ENCODE measurements at regions of chr20 and their contacts with region 1.

Region 1: DNA sequence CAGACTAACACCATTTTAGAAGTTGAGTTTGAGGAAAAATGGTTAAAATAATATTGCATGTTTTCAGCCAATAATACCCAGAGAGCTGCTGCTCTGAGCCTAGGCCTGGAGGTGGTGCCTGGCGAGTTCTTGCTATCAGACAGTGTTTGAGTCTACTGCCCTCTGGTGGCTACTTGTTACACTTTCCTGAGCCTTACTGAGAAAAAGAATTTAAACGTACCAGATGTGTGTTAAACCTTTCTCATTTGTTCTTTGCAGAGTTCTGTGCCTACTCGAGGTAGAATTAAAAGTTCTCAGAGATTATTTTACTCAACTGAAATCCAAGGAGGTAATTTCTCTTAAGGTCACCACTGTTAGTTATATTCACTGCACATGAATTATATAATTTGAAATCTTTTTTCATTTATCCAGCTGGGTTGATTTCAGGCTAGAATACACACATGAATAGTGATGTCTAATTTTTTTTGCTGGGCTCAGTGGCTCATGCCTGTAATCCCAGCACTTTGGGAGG is 38.2 kb downstream of the SHLD1 start:
- DNase-seq: peak; percentile 89
- ATAC-seq: peak; percentile 99
- H3K4me3 ChIP-seq: no peak overlapping the region
- H3K4me3 Mint-ChIP-seq: no peak overlapping the region
- H3K27ac ChIP-seq: no peak overlapping the region
- H3K27ac Mint-ChIP-seq: peak overlapping the region; percentile 17
- H3K4me1 ChIP-seq: no peaks in the 10 kb centered on the region
- H3K4me1 Mint-ChIP-seq: peaks cover 11% of the 10 kb centered on the region
- H3K27me3 ChIP-seq: no peaks in the 10 kb centered on the region
- H3K27me3 Mint-ChIP-seq: no peaks in the 10 kb centered on the region
- CTCF ChIP-seq: peak; percentile 96

Region 2: GRCh38 chr20:5550733-5551529 is 237.5 kb before region 1 on chr20:
- CTCF ChIA-PET with region 1: interaction called, 12 read pairs
- POLR2A ChIA-PET with region 1: no interaction called
- intact Hi-C with region 1: no loop called
- DNase-seq: no peak
- ATAC-seq: no peak
- H3K4me3 ChIP-seq: no peak overlapping the region
- H3K4me3 Mint-ChIP-seq: no peak overlapping the region
- H3K27ac ChIP-seq: no peak overlapping the region
- H3K27ac Mint-ChIP-seq: peak overlapping the region; percentile 3
- H3K4me1 ChIP-seq: no peaks in the 10 kb centered on the region
- H3K4me1 Mint-ChIP-seq: no peaks in the 10 kb centered on the region
- H3K27me3 ChIP-seq: no peaks in the 10 kb centered on the region
- H3K27me3 Mint-ChIP-seq: no peaks in the 10 kb centered on the region
- CTCF ChIP-seq: no peak

Region 3: DNA sequence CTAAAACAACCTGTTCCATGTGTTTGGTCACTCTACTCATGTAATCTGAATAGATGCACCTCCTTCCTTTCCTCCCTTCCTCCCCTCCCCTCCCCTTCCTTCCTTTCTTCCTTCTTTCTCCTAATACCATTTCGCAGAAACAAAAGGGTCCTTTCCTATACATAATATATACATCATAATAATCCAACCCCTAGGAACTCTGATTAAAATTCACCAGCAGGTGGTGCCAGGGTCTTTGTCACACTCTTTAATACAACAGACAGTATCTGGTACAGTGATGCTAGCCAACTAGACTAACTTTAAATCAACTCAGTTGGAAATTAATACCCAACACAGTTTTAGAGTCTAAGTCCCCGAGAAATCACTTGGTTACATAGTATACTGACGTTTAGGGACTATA is 219.4 kb before region 1 on chr20:
- CTCF ChIA-PET with region 1: interaction called, 228 read pairs
- POLR2A ChIA-PET with region 1: interaction called, 4 read pairs
- intact Hi-C with region 1: loop called (anchors 1 kb)
- DNase-seq: peak; percentile 74
- ATAC-seq: peak; percentile 84
- H3K4me3 ChIP-seq: no peak overlapping the region
- H3K4me3 Mint-ChIP-seq: no peak overlapping the region
- H3K27ac ChIP-seq: peak overlapping the region in 1 of 2 donors; percentile 24
- H3K27ac Mint-ChIP-seq: no peak overlapping the region
- H3K4me1 ChIP-seq: peaks cover 10 to 12% of the 10 kb centered on the region in 2 donors
- H3K4me1 Mint-ChIP-seq: peaks cover 23% of the 10 kb centered on the region
- H3K27me3 ChIP-seq: no peaks in the 10 kb centered on the region
- H3K27me3 Mint-ChIP-seq: no peaks in the 10 kb centered on the region
- CTCF ChIP-seq: peak; percentile 71

Region 4: GRCh38 chr20:5596401-5597193 is 191.8 kb before region 1 on chr20:
- CTCF ChIA-PET with region 1: interaction called, 14 read pairs
- POLR2A ChIA-PET with region 1: no interaction called
- intact Hi-C with region 1: no loop called
- DNase-seq: no peak
- ATAC-seq: no peak
- H3K4me3 ChIP-seq: no peak overlapping the region
- H3K4me3 Mint-ChIP-seq: no peak overlapping the region
- H3K27ac ChIP-seq: peak overlapping the region in 1 of 2 donors; percentile 12
- H3K27ac Mint-ChIP-seq: peak overlapping the region; percentile 62
- H3K4me1 ChIP-seq: peaks cover 16 to 18% of the 10 kb centered on the region in 2 donors
- H3K4me1 Mint-ChIP-seq: peaks cover 58% of the 10 kb centered on the region
- H3K27me3 ChIP-seq: no peaks in the 10 kb centered on the region
- H3K27me3 Mint-ChIP-seq: no peaks in the 10 kb centered on the region
- CTCF ChIP-seq: no peak

Region 5: GRCh38 chr20:5770987-5771318 is 17.5 kb before region 1 on chr20:
- CTCF ChIA-PET with region 1: interaction called, 25 read pairs
- POLR2A ChIA-PET with region 1: no interaction called
- intact Hi-C with region 1: no loop called
- DNase-seq: peak; percentile 60
- ATAC-seq: peak; percentile 72
- H3K4me3 ChIP-seq: peak overlapping the region in 1 of 5 experiments; percentile 26
- H3K4me3 Mint-ChIP-seq: peak overlapping the region; percentile 65
- H3K27ac ChIP-seq: peak overlapping the region; percentile 45 to 79
- H3K27ac Mint-ChIP-seq: peak overlapping the region; percentile 89
- H3K4me1 ChIP-seq: peaks cover 50 to 57% of the 10 kb centered on the region in 2 donors
- H3K4me1 Mint-ChIP-seq: peaks cover 67% of the 10 kb centered on the region
- H3K27me3 ChIP-seq: no peaks in the 10 kb centered on the region
- H3K27me3 Mint-ChIP-seq: no peaks in the 10 kb centered on the region
- CTCF ChIP-seq: no peak

Region 6: GRCh38 chr20:5848711-5849505 is 60.5 kb after region 1 on chr20:
- CTCF ChIA-PET with region 1: no interaction called
- POLR2A ChIA-PET with region 1: no interaction called
- intact Hi-C with region 1: no loop called
- DNase-seq: no peak
- ATAC-seq: no peak
- H3K4me3 ChIP-seq: no peak overlapping the region
- H3K4me3 Mint-ChIP-seq: no peak overlapping the region
- H3K27ac ChIP-seq: no peak overlapping the region
- H3K27ac Mint-ChIP-seq: no peak overlapping the region
- H3K4me1 ChIP-seq: no peaks in the 10 kb centered on the region
- H3K4me1 Mint-ChIP-seq: peaks cover 5% of the 10 kb centered on the region
- H3K27me3 ChIP-seq: no peaks in the 10 kb centered on the region
- H3K27me3 Mint-ChIP-seq: no peaks in the 10 kb centered on the region
- CTCF ChIP-seq: no peak

Region 7: DNA sequence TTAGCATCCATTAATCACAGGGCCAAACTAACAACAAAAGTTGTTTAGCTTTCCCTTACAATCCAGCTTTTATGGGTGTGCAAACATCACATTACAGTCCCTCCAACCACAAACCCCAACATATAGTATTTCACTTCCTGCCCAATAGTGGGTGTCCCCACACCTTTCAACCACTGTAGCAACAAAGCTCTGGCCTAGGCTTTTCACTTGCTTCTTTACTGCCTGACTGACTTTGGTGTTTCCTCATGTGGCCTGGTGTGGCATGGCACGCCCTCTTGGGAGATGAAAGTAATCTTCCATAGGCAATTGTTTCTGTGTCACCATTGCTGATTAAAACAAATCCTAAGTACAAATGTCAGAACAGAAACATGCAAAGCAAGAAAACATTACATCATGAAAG is 208.3 kb after region 1 on chr20:
- CTCF ChIA-PET with region 1: no interaction called
- POLR2A ChIA-PET with region 1: no interaction called
- intact Hi-C with region 1: loop called (anchors 5 kb)
- DNase-seq: peak; percentile 52
- ATAC-seq: peak; percentile 75
- H3K4me3 ChIP-seq: no peak overlapping the region
- H3K4me3 Mint-ChIP-seq: no peak overlapping the region
- H3K27ac ChIP-seq: no peak overlapping the region
- H3K27ac Mint-ChIP-seq: peak overlapping the region; percentile 66
- H3K4me1 ChIP-seq: peaks cover 4 to 10% of the 10 kb centered on the region in 2 donors
- H3K4me1 Mint-ChIP-seq: peaks cover 10% of the 10 kb centered on the region
- H3K27me3 ChIP-seq: no peaks in the 10 kb centered on the region
- H3K27me3 Mint-ChIP-seq: no peaks in the 10 kb centered on the region
- CTCF ChIP-seq: no peak

Region 8: GRCh38 chr20:7248281-7249201 is 1460.1 kb after region 1 on chr20:
- CTCF ChIA-PET with region 1: no interaction called
- POLR2A ChIA-PET with region 1: no interaction called
- intact Hi-C with region 1: no loop called
- DNase-seq: no peak
- ATAC-seq: no peak
- H3K4me3 ChIP-seq: no peak overlapping the region
- H3K4me3 Mint-ChIP-seq: no peak overlapping the region
- H3K27ac ChIP-seq: no peak overlapping the region
- H3K27ac Mint-ChIP-seq: no peak overlapping the region
- H3K4me1 ChIP-seq: no peaks in the 10 kb centered on the region
- H3K4me1 Mint-ChIP-seq: no peaks in the 10 kb centered on the region
- H3K27me3 ChIP-seq: no peaks in the 10 kb centered on the region
- H3K27me3 Mint-ChIP-seq: no peaks in the 10 kb centered on the region
- CTCF ChIP-seq: no peak

Measured in B cell (primary cell).